ENCODE measurements at regions of chr11 and their contacts with region 1.

Region 1: DNA sequence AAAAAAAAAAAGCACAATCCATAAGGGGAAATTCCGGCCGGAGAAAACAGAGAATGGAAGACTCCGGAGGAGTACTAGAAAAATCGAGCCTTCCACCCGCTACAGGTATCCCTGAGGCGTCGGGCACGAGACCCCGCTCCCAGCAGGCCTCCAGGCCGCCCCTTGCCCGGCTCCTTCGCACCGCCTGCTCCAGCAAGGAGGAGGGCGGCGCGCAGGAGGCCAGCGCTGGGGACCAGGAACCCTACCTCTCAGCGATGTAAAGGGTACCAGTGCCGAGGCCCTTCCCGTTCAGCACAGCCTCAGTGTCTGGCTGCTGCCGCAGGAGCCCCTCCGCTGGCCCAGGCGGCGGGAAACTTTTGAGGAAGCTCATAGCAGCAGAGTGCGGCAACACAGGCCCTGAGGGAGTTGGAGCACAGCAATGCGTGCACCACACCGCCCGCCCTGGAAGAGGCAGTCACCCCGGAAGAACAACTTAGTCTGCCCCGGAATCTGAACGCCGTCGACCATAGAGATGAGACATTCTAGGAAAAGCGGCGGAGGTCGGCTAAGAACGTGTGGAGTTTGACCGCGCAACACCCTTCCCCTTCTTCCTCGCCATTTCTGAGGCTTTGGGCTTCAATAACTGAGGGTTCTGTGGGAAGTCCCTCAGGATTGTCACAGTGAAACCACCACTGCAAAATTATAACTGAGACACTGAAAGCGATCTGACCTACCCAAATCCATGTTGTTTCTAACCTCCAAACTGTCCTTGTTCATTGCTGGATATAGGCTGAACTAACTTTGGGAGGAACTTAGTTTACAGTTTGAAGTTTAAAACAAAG is at the start of gene CLNS1A:
- DNase-seq: peak; percentile 84 to 91
- H3K4me3 ChIP-seq: peak within 1 kb of the TSS; percentile 84
- H3K27ac ChIP-seq: peak within 1 kb of the TSS; percentile 65
- H3K4me1 ChIP-seq: peaks cover 19% of the 10 kb centered on the region
- H3K27me3 ChIP-seq: no peaks in the 10 kb centered on the region
- CTCF ChIP-seq: no peak
- total RNA-seq, gene CLNS1A: 190 and 232 TPM in 2 replicates

Region 2: DNA sequence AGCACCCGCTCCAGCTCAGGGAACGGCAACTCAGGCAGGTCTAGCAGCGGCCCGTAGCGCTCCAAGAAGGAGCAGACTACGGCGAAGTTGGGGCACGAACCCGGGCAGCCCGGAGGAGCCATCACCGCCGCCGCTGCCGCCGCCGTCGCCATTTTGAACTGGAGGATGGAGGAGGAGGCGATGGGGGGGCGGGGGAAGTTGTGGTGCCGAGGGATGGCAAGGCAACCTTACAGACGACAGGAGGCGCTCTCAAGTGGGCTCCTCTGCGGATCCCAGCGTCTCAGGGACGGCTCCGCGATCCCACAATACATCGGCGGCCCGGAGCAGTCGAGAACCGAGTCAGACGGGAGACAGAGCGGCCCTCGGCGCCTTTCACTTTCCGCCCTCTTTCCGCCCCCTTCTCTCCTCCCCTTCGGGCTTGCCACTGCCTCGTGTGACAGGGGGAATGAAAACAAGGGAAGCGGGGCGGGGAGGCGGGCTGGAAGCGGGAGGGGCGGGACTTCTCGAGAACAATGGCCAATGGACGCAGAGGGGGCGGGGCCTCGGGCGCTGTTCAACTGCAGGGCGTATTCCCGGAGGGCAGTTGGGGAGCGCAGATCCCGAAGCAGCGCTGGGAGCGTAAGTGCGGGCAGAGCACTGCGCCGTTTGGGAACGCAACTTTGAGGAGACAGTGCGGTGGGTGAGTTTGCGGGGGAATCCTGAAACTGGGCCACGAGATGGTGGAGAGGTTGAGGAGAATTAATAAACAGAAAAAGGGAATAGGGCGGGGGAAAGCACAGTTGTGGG is 183.2 kb after region 1 on chr11 and contains the starts of genes AAMDC and RSF1:
- CTCF ChIA-PET with region 1: no interaction called
- POLR2A ChIA-PET with region 1: no interaction called
- intact Hi-C with region 1: loop called (anchors 2 kb)
- DNase-seq: peak; percentile 97 to 99
- H3K4me3 ChIP-seq: peak within 1 kb of the TSS; percentile 89
- H3K27ac ChIP-seq: peak within 1 kb of the TSS; percentile 55
- H3K4me1 ChIP-seq: peaks cover 38% of the 10 kb centered on the region
- H3K27me3 ChIP-seq: no peaks in the 10 kb centered on the region
- CTCF ChIP-seq: peak; percentile 85
- total RNA-seq, gene AAMDC: 39.8 and 59.3 TPM in 2 replicates
- total RNA-seq, gene RSF1: 110 and 124 TPM in 2 replicates

Region 3: GRCh38 chr11:78079232-78080083 is 441.9 kb after region 1 on chr11 and contains the start of gene NDUFC2:
- CTCF ChIA-PET with region 1: no interaction called
- POLR2A ChIA-PET with region 1: no interaction called
- intact Hi-C with region 1: loop called (anchors 1 kb)
- DNase-seq: peak; percentile 73 to 82
- H3K4me3 ChIP-seq: peak within 1 kb of the TSS; percentile 89
- H3K27ac ChIP-seq: peak within 1 kb of the TSS; percentile 46
- H3K4me1 ChIP-seq: peaks cover 35% of the 10 kb centered on the region
- H3K27me3 ChIP-seq: no peaks in the 10 kb centered on the region
- CTCF ChIP-seq: 0 out of 2 replicates have a peak, but pooled peaks have one; percentile 14
- total RNA-seq, gene NDUFC2: 380 and 394 TPM in 2 replicates

Region 4: GRCh38 chr11:78228467-78228866 is 590.9 kb after region 1 on chr11:
- CTCF ChIA-PET with region 1: no interaction called
- POLR2A ChIA-PET with region 1: no interaction called
- intact Hi-C with region 1: loop called (anchors 5 kb)
- DNase-seq: peak; percentile 45 to 64
- H3K4me3 ChIP-seq: no peak overlapping the region
- H3K27ac ChIP-seq: no peak overlapping the region
- H3K4me1 ChIP-seq: no peaks in the 10 kb centered on the region
- H3K27me3 ChIP-seq: no peaks in the 10 kb centered on the region
- CTCF ChIP-seq: peak; percentile 86

Region 5: GRCh38 chr11:79627261-79627660 is 1989.7 kb after region 1 on chr11:
- CTCF ChIA-PET with region 1: interaction called, 11 read pairs
- POLR2A ChIA-PET with region 1: no interaction called
- intact Hi-C with region 1: no loop called
- DNase-seq: no peak
- H3K4me3 ChIP-seq: no peak overlapping the region
- H3K27ac ChIP-seq: no peak overlapping the region
- H3K4me1 ChIP-seq: no peaks in the 10 kb centered on the region
- H3K27me3 ChIP-seq: peaks cover 3% of the 10 kb centered on the region; the same call in 1 of the 2 replicates
- CTCF ChIP-seq: no peak